ENCODE measurements at regions of chr1 and their contacts with region 1.

Region 1: DNA sequence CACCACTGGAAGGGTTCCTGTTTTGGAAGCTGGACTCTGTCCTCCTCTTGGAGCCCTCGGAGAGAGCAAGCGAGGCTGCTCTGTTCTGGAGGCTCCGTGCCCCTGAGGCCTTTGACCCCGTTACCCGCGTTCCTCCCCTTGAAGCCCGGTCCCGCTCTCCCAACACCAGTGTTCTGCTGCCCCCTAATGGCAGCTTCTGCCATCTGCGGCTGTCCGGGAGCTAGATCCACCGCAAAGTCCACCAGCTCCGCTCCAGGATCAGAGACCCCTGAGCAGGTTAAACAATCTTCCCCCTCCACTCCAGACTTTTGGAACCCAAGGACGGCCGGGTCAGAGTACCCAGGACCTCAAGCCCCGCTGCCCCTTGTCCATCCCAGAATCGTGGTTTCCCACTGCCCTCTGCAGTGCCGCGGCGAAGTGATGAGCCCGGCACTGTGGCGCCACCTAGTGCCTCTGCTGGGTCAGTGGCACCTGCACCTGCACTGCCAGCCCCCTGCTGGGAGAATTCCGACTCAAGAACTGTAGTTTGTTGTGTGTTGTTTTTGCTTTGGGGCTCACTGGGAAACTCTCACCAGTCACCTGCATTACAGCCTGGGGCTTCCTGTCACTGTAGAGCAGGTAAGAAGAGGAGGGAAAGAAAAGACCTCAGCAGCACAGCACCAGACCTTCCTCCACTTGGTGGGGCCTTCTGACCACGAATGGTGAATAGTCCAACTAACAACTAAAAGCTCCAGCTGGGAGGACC is 63.5 kb upstream of the NFASC start:
- DNase-seq: peak; percentile 59
- H3K4me3 ChIP-seq: peak overlapping the region; percentile 19 to 27
- H3K27ac ChIP-seq: no peak overlapping the region
- H3K4me1 ChIP-seq: no peaks in the 10 kb centered on the region
- H3K27me3 ChIP-seq: no peaks in the 10 kb centered on the region
- CTCF ChIP-seq: peak; percentile 84 to 96 (median 89)
- POLR2A ChIP-seq: no peak

Region 2: DNA sequence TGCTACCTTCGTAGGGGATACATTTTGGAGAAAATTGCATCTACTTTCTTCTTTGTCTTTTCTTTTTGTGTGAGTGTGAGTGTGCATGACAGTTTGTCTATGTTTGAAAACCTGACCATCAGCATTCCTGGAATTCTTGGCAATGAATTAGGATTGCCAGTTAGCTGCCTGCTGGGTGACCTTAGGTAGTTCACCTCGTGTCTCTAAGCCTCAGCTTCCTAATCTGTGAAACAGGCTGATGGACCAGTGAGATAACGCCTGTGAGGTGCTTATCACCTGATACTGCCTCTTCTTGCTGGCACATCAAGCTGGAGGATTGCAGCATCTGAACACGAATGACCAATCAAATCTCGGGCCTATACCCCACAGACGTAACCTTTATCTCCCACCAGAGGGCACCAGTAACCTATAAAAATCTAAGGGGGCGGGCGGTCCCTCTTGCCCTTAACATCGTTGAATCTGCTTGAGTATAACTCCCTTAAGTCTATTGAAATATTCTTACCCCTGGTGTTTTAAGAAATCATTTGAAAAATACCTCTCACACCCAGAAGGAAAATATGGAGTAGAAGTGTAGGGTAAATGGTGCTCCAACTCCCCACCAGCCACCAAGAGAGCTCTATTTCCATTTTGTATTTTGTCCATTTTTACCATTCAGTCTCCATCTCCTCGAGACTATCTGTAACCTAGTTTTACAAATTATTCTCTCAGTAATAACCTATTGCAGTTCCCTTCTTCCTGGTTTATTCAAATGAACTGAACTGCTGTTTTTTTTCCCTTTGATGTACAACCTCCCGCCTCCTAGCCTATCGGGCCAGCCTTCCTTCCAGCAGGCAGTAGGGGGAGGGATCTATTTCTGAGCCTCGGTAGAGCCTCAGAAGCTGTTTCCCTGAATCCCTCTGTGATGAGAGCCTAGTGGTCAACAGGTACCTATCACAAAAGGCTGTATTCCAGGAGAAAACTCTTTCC is 241.2 kb before region 1 on chr1:
- intact Hi-C with region 1: loop called (anchors 2 kb)
- DNase-seq: peak; percentile 39
- H3K4me3 ChIP-seq: no peak overlapping the region
- H3K27ac ChIP-seq: no peak overlapping the region
- H3K4me1 ChIP-seq: no peaks in the 10 kb centered on the region
- H3K27me3 ChIP-seq: no peaks in the 10 kb centered on the region
- CTCF ChIP-seq: peak in 3 of 4 experiments; percentile 59 to 71 (median 63)
- POLR2A ChIP-seq: no peak

Region 3: DNA sequence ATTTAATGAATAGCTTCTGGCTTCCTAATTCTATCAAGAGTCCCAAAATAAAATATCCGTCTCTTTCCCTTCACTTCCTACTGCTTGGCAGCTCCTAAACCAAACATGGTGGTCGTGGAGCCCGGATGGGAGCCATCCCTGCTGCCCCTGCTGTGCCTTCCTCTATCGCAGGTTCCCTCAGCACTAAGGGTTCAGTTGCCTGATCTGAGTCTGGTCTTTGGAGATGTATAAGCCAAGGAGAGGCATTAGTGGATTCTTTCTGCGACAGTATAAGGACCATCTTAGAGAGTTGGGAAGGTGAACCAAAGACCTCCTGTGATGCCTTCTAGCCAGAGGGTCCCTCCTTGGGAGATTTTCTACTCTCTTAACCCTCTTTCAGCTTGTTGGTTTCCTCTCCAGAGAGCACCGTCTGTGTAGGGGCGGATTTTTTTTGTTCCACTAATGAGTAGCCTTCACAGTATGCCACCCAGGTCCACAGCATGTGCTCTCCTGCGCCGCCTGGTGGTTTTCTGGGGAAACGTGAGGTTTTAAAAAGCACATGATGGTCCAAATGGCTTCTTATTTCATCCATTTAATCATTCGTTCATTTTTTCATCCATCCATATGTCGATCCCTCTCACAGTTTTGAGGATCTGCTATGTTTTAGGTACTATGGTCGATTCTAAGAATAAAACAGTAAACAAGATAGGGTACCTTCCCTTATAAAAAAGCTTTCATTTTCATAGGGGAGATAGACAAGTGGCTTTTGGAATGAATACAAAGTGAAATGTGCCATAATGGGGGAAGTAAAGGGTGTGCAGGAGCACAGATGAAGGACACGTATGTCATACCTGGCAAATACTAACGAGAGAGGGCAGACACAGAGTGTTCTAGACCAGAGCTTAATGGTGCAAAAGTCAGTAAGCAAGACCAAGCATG is 134.6 kb after region 1 on chr1:
- intact Hi-C with region 1: loop called (anchors 1 kb)
- DNase-seq: peak; percentile 12
- H3K4me3 ChIP-seq: no peak overlapping the region
- H3K27ac ChIP-seq: no peak overlapping the region
- H3K4me1 ChIP-seq: no peaks in the 10 kb centered on the region
- H3K27me3 ChIP-seq: no peaks in the 10 kb centered on the region
- CTCF ChIP-seq: peak; percentile 66 to 80 (median 76)
- POLR2A ChIP-seq: no peak

Region 4: DNA sequence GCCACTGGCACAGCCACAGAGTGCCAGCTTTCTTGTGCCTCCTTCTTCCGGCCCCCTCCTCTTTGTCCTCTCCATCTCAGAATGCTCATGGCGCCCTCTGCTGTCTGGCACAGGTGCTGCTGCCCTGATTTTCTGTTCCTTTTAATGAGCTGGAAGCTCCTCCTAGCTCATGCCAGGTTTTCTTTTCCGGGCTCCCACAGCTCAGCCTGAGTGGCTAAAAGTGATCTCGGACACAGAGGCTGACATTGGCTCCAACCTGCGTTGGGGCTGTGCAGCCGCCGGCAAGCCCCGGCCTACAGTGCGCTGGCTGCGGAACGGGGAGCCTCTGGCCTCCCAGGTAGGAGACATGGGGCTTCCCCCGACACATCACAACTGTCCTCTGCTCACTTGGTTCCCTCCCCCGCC is 254.6 kb after region 1 on chr1:
- intact Hi-C with region 1: loop called (anchors 10 kb)
- DNase-seq: peak; percentile 63
- H3K4me3 ChIP-seq: no peak overlapping the region
- H3K27ac ChIP-seq: no peak overlapping the region
- H3K4me1 ChIP-seq: no peaks in the 10 kb centered on the region
- H3K27me3 ChIP-seq: no peaks in the 10 kb centered on the region
- CTCF ChIP-seq: peak; percentile 67 to 91 (median 88)
- POLR2A ChIP-seq: no peak

Measured in prostate gland (tissue), 2 donors.